Activated naive CD8-positive, alpha-beta T cell treated with anti-CD3 and anti-CD28 coated beads, Interleukin-2, amount 10 ng/mL, durations not matched to agents 7 days and 5 days (primary cell): ENCODE measurements at regions of chr2 and their contacts with region 1.

Region 1: DNA sequence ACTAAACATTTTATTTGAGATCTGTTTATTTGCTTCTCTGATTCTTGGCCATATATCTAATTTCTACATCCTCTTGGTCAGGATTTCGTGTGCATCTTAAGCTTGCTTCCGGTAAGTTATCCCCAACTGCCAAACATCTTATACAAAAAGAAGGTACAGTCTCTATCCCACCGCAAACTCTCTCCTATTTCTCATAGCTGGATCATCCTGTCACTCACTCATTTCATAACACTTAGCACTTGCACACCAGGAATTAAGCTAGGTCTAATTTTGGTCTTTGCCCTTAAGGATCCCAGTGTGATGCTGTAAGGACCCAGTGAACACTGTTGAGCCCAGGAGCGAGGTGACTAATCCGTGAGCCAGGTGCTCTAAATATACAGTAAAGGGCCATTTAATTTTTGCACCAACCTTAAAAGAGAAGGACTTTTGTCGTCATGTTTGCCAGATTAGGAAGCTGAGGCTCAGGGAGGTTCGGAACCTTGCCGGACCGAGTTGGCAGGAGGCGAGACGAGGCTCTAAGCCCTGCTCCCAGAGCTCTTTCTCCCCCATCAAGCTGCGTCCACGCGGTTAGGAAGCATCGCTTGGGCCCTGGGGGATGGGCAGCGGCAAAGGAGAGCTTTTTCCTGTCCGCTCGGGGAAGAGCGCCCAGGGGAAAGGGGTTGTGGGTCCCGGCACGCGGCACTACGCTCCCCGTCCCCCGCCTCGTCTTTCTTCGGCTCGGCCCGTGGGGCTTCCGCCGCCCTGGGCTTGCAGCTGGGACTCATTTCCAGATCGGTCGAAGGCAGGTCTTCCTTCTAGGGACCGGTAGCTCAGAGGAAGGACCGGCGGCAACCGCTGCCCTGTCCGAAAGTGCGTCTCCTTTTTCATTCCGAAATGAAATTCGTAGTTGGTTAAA is 4.1 kb upstream of the ITPRIPL1 start:
- DNase-seq: peak; percentile 67
- ATAC-seq: peak; percentile 17
- H3K4me3 Mint-ChIP-seq: peak overlapping the region; percentile 89
- H3K27ac Mint-ChIP-seq: peak overlapping the region; percentile 84
- H3K4me1 Mint-ChIP-seq: peaks cover 56% of the 10 kb centered on the region
- H3K27me3 Mint-ChIP-seq: no peaks in the 10 kb centered on the region

Region 2: DNA sequence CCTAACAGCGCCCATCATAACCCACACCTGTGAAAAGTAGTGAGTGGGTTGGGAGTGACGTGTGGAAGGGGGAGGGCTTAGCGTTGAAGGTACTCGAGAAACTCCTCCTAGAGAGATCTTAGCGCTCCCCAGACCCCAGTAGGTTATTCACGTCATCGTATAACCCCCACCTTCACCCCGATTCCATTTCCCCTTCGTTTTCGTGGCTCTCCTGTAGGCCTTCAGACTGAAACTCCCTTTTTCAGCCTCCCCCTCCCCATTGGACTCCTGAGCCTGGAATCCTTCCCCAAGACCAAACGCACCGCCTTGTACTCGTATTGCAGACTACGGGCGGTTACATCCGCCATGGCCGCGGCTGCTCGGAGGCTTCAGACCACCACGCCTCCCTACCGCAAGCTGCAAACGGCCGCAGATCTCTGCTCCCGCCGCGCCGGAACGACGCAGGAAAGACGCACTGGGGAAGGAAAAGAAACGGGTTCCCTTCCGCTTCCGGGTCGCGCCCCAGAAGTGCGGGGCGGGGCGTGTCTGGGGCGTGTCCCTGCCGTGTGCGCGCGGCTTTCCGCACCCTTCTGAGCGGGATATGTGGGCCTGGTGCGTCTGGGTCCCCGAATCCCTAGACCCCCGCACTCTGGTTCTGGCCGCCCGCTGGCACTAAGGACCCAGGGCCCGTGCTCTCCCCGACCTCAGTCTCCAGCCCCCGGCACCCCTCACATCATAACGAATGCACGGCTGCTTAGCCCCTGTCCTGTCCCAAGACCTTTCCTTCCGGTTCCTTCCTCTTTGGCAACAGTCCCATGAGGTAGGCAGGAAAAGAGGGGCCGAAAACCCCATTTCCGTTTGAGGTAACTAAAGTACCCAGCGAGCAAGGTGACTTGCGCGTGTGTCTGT is 15.6 kb before region 1 on chr2 and contains the start of gene SNRNP200:
- POLR2A ChIA-PET with region 1: interaction called, 96 read pairs
- DNase-seq: peak; percentile 93
- ATAC-seq: peak; percentile 91
- H3K4me3 Mint-ChIP-seq: peak within 1 kb of the TSS; percentile 100
- H3K27ac Mint-ChIP-seq: peak within 1 kb of the TSS; percentile 99
- H3K4me1 Mint-ChIP-seq: peaks cover 48% of the 10 kb centered on the region
- H3K27me3 Mint-ChIP-seq: no peaks in the 10 kb centered on the region
- total RNA-seq, gene SNRNP200: 194 to 201 TPM

Region 3: DNA sequence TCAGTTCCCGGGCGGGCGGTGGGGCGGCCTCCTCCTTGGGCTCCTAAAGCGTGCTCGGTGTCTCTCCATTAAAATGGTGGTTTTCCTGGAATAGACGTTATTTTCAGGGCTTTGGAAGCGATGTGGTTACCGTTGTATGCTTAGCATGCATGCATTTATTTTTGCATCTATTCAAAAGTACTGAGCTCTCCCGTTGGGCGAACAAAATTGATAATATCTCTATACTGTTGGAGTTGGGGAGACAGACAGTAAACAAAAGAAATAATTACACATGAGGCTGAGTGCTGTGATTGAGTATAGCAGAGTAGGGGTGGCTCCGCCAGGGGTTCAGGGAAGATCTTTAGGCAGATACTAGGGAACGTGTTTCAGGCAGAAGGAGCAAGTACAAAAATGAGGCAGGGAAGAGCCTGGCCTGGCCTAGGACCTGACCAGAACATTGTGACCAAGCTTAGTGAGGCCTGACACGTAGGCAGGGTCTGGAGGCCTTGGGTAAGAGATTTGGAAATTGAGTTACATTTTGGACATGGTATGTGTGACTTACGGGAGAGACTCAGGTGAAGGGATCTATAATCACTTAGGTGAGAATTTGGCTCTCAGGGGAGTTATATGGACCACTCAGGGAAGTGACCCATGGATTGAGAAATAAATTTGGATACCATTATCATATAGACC is 15.3 kb after region 1 on chr2:
- POLR2A ChIA-PET with region 1: interaction called, 169 read pairs
- DNase-seq: no peak
- ATAC-seq: no peak
- H3K4me3 Mint-ChIP-seq: peak overlapping the region; percentile 92
- H3K27ac Mint-ChIP-seq: peak overlapping the region; percentile 78
- H3K4me1 Mint-ChIP-seq: peaks cover 49% of the 10 kb centered on the region
- H3K27me3 Mint-ChIP-seq: no peaks in the 10 kb centered on the region

Region 4: DNA sequence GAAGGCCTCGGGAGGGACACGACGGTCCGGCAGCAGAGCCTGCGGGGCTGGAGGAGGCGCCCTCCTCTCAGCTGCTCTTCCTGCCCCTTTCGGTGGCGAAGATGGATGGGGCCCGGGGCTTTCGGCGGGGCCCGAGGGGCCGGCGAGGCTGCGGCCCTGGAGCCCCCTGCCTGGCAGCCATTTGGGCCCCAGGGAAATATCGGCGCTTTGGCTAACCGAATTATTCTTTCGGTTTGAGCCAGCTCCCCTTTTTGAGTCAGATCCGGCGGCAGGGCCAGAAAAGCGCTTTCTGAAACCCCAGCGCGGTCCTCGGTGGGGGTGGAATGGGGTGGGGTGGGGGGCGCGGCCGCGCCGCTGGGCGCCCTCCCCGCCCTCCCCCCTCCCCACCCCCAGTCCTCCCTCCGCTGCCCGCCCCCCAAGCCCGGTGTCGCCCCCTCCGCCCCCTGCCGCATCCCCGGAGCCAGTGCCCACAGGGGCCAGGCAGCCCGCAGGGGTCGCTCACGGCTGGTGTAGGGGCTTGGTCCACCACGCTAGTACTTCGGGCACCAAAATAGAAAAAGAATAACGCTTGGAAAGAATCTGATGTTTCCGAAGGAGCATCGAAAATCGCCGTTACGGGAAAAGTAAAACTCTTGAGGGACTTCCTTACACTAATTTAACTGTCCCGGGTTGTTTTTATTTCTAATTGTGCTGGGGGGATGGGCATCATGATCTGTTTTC is 206.5 kb after region 1 on chr2:
- POLR2A ChIA-PET with region 1: interaction called, 10 read pairs
- DNase-seq: peak; percentile 68
- ATAC-seq: peak; percentile 19
- H3K4me3 Mint-ChIP-seq: peak overlapping the region; percentile 76
- H3K27ac Mint-ChIP-seq: peak overlapping the region; percentile 83
- H3K4me1 Mint-ChIP-seq: peaks cover 65% of the 10 kb centered on the region
- H3K27me3 Mint-ChIP-seq: peaks cover 2% of the 10 kb centered on the region

Region 5: DNA sequence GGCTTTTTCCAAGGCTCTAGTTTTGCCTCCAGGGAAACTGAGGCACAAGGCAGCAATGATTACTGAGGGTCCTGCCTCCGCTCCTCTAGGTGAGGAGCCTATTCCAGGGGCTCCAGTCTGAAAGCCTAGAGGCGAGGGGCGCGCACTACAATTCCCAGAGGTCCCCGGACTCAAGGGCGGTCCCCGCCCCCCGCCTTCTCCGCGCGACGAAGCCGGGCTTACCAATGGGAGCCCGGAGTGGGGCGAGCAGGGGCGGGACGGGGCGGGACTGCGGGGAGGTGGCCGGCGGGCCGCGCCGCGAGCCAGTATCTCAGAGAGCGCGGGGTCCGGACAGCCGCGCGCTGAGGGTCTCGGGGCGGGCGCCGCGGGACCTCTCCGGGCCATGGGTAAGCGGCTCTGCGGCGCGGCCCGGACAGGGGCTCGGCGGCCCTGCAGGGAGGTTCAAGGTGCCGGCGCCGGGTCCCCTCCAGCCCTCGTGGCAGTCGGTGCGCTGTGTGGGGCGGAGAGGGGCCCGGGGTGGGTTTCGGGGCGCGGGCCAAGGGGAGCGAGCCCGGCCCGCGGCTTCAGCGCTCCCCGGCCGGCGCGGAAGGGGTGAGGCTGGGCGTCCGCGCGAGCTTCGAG is 215.6 kb after region 1 on chr2 and contains the start of gene ARID5A:
- POLR2A ChIA-PET with region 1: interaction called, 14 read pairs
- DNase-seq: peak; percentile 90
- ATAC-seq: peak; percentile 58
- H3K4me3 Mint-ChIP-seq: peak within 1 kb of the TSS; percentile 93
- H3K27ac Mint-ChIP-seq: peak within 1 kb of the TSS; percentile 96
- H3K4me1 Mint-ChIP-seq: peaks cover 43% of the 10 kb centered on the region
- H3K27me3 Mint-ChIP-seq: peaks cover 2% of the 10 kb centered on the region
- total RNA-seq, gene ARID5A: 62.1 to 62.8 TPM